CD4-positive, alpha-beta T cell (primary cell): ENCODE measurements at regions of chr7 and their contacts with region 1.

Region 1: DNA sequence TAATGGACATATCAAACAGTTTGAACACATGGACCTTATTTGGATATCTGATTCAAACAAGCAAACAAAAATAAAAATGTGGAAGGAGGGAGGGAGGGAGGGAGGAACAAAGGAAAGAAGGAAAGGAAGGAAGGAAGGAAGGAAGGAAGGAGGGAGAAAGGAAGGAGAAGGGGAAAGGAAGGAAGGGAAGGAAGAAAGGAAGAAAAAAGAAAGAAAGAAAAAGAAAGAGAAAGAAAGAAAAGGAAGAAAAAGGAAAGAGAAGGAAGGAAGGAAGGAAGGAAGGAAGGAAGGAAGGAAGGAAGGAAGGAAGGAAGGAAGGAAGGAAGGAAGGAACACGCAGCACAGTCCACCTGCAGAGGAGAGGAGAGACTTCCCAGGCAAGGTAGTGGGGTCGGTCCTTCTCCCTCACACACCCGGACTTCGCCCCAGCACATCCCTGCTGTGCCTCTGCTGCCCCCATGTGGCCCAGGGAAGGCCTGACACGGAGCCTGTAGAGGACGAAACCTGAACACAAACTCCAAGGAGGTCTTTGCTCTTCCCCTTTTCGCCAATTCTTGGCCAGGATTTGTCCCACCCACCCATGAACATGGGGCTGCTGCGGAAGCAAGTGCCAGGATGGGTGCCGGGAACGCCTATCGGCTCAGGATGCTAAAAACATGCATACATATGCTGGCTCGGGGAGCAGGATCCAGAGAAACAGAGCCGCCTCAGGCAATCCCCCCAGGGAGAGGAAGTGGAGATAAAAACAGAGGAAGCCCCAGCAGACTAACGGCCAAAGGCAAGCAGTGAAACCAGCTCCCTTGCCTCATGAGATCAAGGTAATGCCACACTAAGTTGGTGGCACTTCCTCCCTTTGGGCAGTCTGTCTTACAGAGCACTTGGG is 52.3 kb upstream of the DGKI start:
- DNase-seq: peak; percentile 55 to 83 (median 69)
- ATAC-seq: peak; percentile 97
- H3K4me3 ChIP-seq: no peak overlapping the region
- H3K4me3 Mint-ChIP-seq: no peak overlapping the region
- H3K27ac ChIP-seq: no peak overlapping the region
- H3K27ac Mint-ChIP-seq: no peak overlapping the region
- H3K4me1 ChIP-seq: peaks cover 14% of the 10 kb centered on the region
- H3K4me1 Mint-ChIP-seq: peaks cover 17% of the 10 kb centered on the region
- H3K27me3 ChIP-seq: no peaks in the 10 kb centered on the region
- H3K27me3 Mint-ChIP-seq: no peaks in the 10 kb centered on the region
- CTCF ChIP-seq: peak; percentile 76

Region 2: GRCh38 chr7:137656227-137656849 is 242.7 kb before region 1 on chr7:
- CTCF ChIA-PET with region 1: no interaction called
- POLR2A ChIA-PET with region 1: no interaction called
- intact Hi-C with region 1: loop called (anchors 2 to 5 kb)
- DNase-seq: peak; percentile 7 to 64 (median 34)
- ATAC-seq: no peak
- H3K4me3 ChIP-seq: no peak overlapping the region
- H3K4me3 Mint-ChIP-seq: no peak overlapping the region
- H3K27ac ChIP-seq: no peak overlapping the region
- H3K27ac Mint-ChIP-seq: no peak overlapping the region
- H3K4me1 ChIP-seq: no peaks in the 10 kb centered on the region
- H3K4me1 Mint-ChIP-seq: no peaks in the 10 kb centered on the region
- H3K27me3 ChIP-seq: peaks cover 0 to 2% of the 10 kb centered on the region in 2 experiments
- H3K27me3 Mint-ChIP-seq: peaks cover 16% of the 10 kb centered on the region
- CTCF ChIP-seq: peak; percentile 64

Region 3: GRCh38 chr7:138008547-138009349 is 109.7 kb after region 1 on chr7:
- CTCF ChIA-PET with region 1: interaction called, 65 read pairs
- POLR2A ChIA-PET with region 1: interaction called, 3 read pairs
- intact Hi-C with region 1: loop called (anchors 1 kb)
- DNase-seq: peak in 8 of 14 experiments; percentile 11 to 75 (median 28)
- ATAC-seq: peak; percentile 57
- H3K4me3 ChIP-seq: no peak overlapping the region
- H3K4me3 Mint-ChIP-seq: no peak overlapping the region
- H3K27ac ChIP-seq: no peak overlapping the region
- H3K27ac Mint-ChIP-seq: no peak overlapping the region
- H3K4me1 ChIP-seq: peaks cover 5% of the 10 kb centered on the region
- H3K4me1 Mint-ChIP-seq: no peaks in the 10 kb centered on the region
- H3K27me3 ChIP-seq: no peaks in the 10 kb centered on the region
- H3K27me3 Mint-ChIP-seq: no peaks in the 10 kb centered on the region
- CTCF ChIP-seq: peak; percentile 90

Region 4: GRCh38 chr7:138161600-138162081 is 262.6 kb after region 1 on chr7:
- CTCF ChIA-PET with region 1: interaction called, 3 read pairs
- POLR2A ChIA-PET with region 1: no interaction called
- intact Hi-C with region 1: loop called (anchors 1 to 10 kb)
- DNase-seq: peak; percentile 51 to 94 (median 64)
- ATAC-seq: peak; percentile 100
- H3K4me3 ChIP-seq: no peak overlapping the region
- H3K4me3 Mint-ChIP-seq: no peak overlapping the region
- H3K27ac ChIP-seq: no peak overlapping the region
- H3K27ac Mint-ChIP-seq: no peak overlapping the region
- H3K4me1 ChIP-seq: no peaks in the 10 kb centered on the region
- H3K4me1 Mint-ChIP-seq: no peaks in the 10 kb centered on the region
- H3K27me3 ChIP-seq: no peaks in the 10 kb centered on the region
- H3K27me3 Mint-ChIP-seq: peaks cover 3% of the 10 kb centered on the region
- CTCF ChIP-seq: peak; percentile 70

Region 5: GRCh38 chr7:138738551-138739335 is 839.7 kb after region 1 on chr7:
- CTCF ChIA-PET with region 1: no interaction called
- POLR2A ChIA-PET with region 1: no interaction called
- intact Hi-C with region 1: loop called (anchors 1 to 2 kb)
- DNase-seq: peak; percentile 74 to 95 (median 84)
- ATAC-seq: peak; percentile 97
- H3K4me3 ChIP-seq: no peak overlapping the region
- H3K4me3 Mint-ChIP-seq: no peak overlapping the region
- H3K27ac ChIP-seq: no peak overlapping the region
- H3K27ac Mint-ChIP-seq: no peak overlapping the region
- H3K4me1 ChIP-seq: no peaks in the 10 kb centered on the region
- H3K4me1 Mint-ChIP-seq: peaks cover 5% of the 10 kb centered on the region
- H3K27me3 ChIP-seq: no peaks in the 10 kb centered on the region
- H3K27me3 Mint-ChIP-seq: no peaks in the 10 kb centered on the region
- CTCF ChIP-seq: peak; percentile 93